ENCODE measurements at regions of chr1 and their contacts with region 1.

Region 1: GRCh38 chr1:29230553-29231378 is at the start of gene MECR:
- DNase-seq: peak; percentile 94
- H3K4me3 ChIP-seq: peak within 1 kb of the TSS; percentile 89
- H3K27ac ChIP-seq: peak within 1 kb of the TSS; percentile 43
- H3K4me1 ChIP-seq: peaks cover 7% of the 10 kb centered on the region; the same call in 1 of the 2 replicates
- H3K27me3 ChIP-seq: no peaks in the 10 kb centered on the region
- total RNA-seq, gene MECR: 19.1 and 23.6 TPM in 2 replicates

Region 2: DNA sequence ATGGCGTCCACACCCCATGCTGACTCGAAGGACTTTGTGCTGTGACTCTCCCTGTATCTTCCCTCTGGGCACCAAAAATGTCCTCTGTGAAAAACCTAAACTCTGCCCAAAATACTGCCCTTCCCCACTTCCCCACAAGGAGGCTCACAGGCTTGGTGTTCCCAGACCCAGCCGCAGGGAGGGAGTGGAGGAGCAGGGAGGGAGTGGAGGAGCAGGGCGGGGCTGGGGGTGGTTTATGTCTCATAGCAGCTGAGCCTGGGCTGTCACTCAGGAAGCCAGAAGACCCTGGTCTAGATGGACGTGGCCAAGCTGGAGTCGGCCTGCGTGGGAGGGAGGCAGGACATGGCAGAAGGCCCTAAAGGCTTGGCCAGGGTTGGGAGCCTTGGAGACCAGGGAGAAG is 467.3 kb after region 1 on chr1:
- in situ Hi-C with region 1: loop called (anchors 25 kb)
- DNase-seq: peak; percentile 83
- H3K4me3 ChIP-seq: no peak overlapping the region
- H3K27ac ChIP-seq: no peak overlapping the region
- H3K4me1 ChIP-seq: no peaks in the 10 kb centered on the region
- H3K27me3 ChIP-seq: no peaks in the 10 kb centered on the region

Region 3: GRCh38 chr1:30718636-30719405 is 1488.1 kb after region 1 on chr1:
- in situ Hi-C with region 1: loop called (anchors 25 kb)
- DNase-seq: peak; percentile 99
- H3K4me3 ChIP-seq: peak overlapping the region; percentile 73
- H3K27ac ChIP-seq: peak overlapping the region; percentile 92
- H3K4me1 ChIP-seq: no peaks in the 10 kb centered on the region
- H3K27me3 ChIP-seq: no peaks in the 10 kb centered on the region

Region 4: DNA sequence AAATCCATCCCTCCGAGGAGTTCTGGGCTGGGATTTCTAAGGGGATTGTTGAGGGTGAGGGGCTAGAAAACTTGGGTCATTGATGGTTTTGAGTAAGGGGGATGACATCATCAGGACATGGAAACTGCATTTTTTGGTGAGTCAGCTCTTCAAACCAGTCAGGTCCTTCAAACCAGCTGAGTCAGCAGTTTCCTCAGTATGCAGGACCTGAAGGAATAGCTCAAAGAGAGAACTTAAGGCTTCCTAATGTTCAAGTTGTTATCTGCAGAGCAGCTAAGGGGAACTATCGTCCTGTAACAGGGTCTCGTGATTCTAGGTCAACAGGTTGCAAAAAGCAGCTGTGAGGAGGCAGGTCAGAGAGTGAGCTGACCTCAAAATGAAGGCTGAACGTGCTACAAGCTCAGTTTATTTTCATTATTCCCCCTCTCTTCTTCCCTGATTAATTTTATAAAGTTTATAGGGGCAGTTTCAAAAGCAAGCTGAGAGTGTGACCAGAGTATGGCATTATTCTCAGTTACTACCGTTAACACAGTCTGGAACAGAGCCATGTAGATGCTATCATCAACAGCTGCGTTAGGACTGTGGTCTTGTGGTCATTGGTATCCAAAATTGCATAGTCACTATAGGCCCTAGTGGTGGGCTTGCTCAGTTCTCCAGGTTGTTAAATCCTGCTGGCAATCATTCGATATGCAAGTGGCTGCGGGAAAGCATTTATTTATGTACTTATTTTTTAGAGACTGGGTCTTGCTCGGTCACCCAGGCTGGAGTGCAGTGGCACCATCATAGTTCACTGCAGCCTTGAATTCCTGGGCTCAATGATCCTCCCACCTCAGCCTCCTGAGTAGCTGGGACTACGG is 1688.5 kb after region 1 on chr1:
- in situ Hi-C with region 1: no loop called
- DNase-seq: peak; percentile 81
- H3K4me3 ChIP-seq: no peak overlapping the region
- H3K27ac ChIP-seq: no peak overlapping the region
- H3K4me1 ChIP-seq: peaks cover 5% of the 10 kb centered on the region; the same call in 1 of the 2 replicates
- H3K27me3 ChIP-seq: no peaks in the 10 kb centered on the region